ENCODE measurements at regions of chr14 and their contacts with region 1.

Region 1: GRCh38 chr14:30521899-30522736 is 36.8 kb upstream of the G2E3 start:
- DNase-seq: peak in 3 of 14 experiments; percentile 53 to 67 (median 60)
- ATAC-seq: peak; percentile 65
- H3K4me3 ChIP-seq: no peak overlapping the region
- H3K4me3 Mint-ChIP-seq: no peak overlapping the region
- H3K27ac ChIP-seq: no peak overlapping the region
- H3K27ac Mint-ChIP-seq: no peak overlapping the region
- H3K4me1 ChIP-seq: no peaks in the 10 kb centered on the region
- H3K4me1 Mint-ChIP-seq: peaks cover 16% of the 10 kb centered on the region
- H3K27me3 ChIP-seq: no peaks in the 10 kb centered on the region
- H3K27me3 Mint-ChIP-seq: no peaks in the 10 kb centered on the region
- CTCF ChIP-seq: peak; percentile 89

Region 2: GRCh38 chr14:29548948-29549370 is 973.2 kb before region 1 on chr14:
- CTCF ChIA-PET with region 1: no interaction called
- POLR2A ChIA-PET with region 1: no interaction called
- intact Hi-C with region 1: loop called in 1 of 2 experiments (anchors 5 kb)
- DNase-seq: peak in 3 of 14 experiments; percentile 2 to 7 (median 5)
- ATAC-seq: no peak
- H3K4me3 ChIP-seq: no peak overlapping the region
- H3K4me3 Mint-ChIP-seq: no peak overlapping the region
- H3K27ac ChIP-seq: no peak overlapping the region
- H3K27ac Mint-ChIP-seq: no peak overlapping the region
- H3K4me1 ChIP-seq: no peaks in the 10 kb centered on the region
- H3K4me1 Mint-ChIP-seq: no peaks in the 10 kb centered on the region
- H3K27me3 ChIP-seq: no peaks in the 10 kb centered on the region
- H3K27me3 Mint-ChIP-seq: no peaks in the 10 kb centered on the region
- CTCF ChIP-seq: no peak

Region 3: DNA sequence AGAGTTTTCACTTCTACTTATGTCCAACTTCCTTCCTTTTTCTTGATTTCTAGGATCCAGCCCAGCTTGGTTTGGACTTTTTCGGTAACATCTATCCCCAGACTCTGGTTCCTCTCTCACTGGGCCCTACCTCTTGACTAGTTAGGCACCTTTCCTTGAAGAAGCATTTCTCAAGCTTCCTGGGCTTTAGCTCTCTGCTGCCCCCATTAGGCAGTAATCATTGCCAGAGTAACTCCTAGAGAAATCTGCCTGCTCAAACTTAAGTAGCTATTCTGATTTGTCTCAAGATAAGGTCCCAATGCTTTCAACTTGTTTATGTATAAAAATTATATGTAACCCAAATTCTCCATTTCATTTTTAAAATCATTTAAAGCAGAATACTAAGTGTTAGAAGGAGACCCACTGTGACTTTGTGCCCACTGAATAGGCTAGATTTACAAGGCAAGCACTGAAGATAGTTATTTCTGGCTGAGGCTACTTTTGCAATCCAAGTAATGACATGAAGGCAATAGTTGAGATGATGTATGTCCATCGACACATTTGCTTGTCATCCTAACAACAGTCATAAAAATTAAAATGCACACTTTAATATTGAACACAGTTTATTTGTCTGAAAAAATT is 238.2 kb before region 1 on chr14:
- CTCF ChIA-PET with region 1: no interaction called
- POLR2A ChIA-PET with region 1: no interaction called
- intact Hi-C with region 1: no loop called
- DNase-seq: no peak
- ATAC-seq: no peak
- H3K4me3 ChIP-seq: no peak overlapping the region
- H3K4me3 Mint-ChIP-seq: no peak overlapping the region
- H3K27ac ChIP-seq: no peak overlapping the region
- H3K27ac Mint-ChIP-seq: no peak overlapping the region
- H3K4me1 ChIP-seq: no peaks in the 10 kb centered on the region
- H3K4me1 Mint-ChIP-seq: no peaks in the 10 kb centered on the region
- H3K27me3 ChIP-seq: no peaks in the 10 kb centered on the region
- H3K27me3 Mint-ChIP-seq: no peaks in the 10 kb centered on the region
- CTCF ChIP-seq: no peak

Region 4: GRCh38 chr14:30569216-30569902 is 47.2 kb after region 1 on chr14:
- CTCF ChIA-PET with region 1: no interaction called
- POLR2A ChIA-PET with region 1: no interaction called
- intact Hi-C with region 1: no loop called
- DNase-seq: no peak
- ATAC-seq: no peak
- H3K4me3 ChIP-seq: no peak overlapping the region
- H3K4me3 Mint-ChIP-seq: no peak overlapping the region
- H3K27ac ChIP-seq: no peak overlapping the region
- H3K27ac Mint-ChIP-seq: no peak overlapping the region
- H3K4me1 ChIP-seq: peaks cover 8% of the 10 kb centered on the region
- H3K4me1 Mint-ChIP-seq: peaks cover 94% of the 10 kb centered on the region
- H3K27me3 ChIP-seq: no peaks in the 10 kb centered on the region
- H3K27me3 Mint-ChIP-seq: no peaks in the 10 kb centered on the region
- CTCF ChIP-seq: no peak

Measured in CD4-positive, alpha-beta T cell (primary cell).